ENCODE measurements at regions of chr12 and their contacts with region 1.

Region 1: DNA sequence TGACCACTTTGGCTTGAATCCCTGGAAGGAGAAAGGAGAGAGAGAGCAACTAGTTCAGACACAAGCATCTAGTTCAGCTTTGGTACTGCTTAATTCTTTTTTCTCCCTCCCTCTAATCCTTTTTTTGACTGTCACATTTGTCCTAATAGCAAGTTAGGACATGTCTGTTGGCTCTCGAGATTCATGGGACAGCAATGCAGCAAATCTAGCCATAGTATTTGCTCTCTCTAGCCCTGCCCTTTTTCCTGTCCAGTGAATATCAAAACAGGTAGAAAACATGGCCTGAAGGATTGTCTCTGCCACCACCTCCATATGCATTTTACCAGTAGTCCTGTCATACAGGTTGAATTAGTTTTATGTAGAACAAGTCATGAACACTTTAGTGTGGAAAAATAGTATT is 116.4 kb downstream of the PTPRB start:
- DNase-seq: no peak
- ATAC-seq: no peak
- H3K4me3 ChIP-seq: no peak overlapping the region
- H3K4me3 Mint-ChIP-seq: no peak overlapping the region
- H3K27ac ChIP-seq: no peak overlapping the region
- H3K27ac Mint-ChIP-seq: no peak overlapping the region
- H3K4me1 ChIP-seq: no peaks in the 10 kb centered on the region
- H3K4me1 Mint-ChIP-seq: no peaks in the 10 kb centered on the region
- H3K27me3 ChIP-seq: no peaks in the 10 kb centered on the region
- H3K27me3 Mint-ChIP-seq: peaks cover 7% of the 10 kb centered on the region
- CTCF ChIP-seq: no peak

Region 2: GRCh38 chr12:70059373-70059772 is 461.5 kb before region 1 on chr12:
- CTCF ChIA-PET with region 1: no interaction called
- POLR2A ChIA-PET with region 1: no interaction called
- intact Hi-C with region 1: no loop called
- DNase-seq: no peak
- ATAC-seq: no peak
- H3K4me3 ChIP-seq: no peak overlapping the region
- H3K4me3 Mint-ChIP-seq: no peak overlapping the region
- H3K27ac ChIP-seq: no peak overlapping the region
- H3K27ac Mint-ChIP-seq: no peak overlapping the region
- H3K4me1 ChIP-seq: no peaks in the 10 kb centered on the region
- H3K4me1 Mint-ChIP-seq: no peaks in the 10 kb centered on the region
- H3K27me3 ChIP-seq: no peaks in the 10 kb centered on the region
- H3K27me3 Mint-ChIP-seq: peaks cover 5% of the 10 kb centered on the region
- CTCF ChIP-seq: no peak

Region 3: GRCh38 chr12:70487440-70487839 is 33.4 kb before region 1 on chr12:
- CTCF ChIA-PET with region 1: no interaction called
- POLR2A ChIA-PET with region 1: no interaction called
- intact Hi-C with region 1: loop called in 1 of 2 experiments (anchors 1 kb)
- DNase-seq: no peak
- ATAC-seq: no peak
- H3K4me3 ChIP-seq: no peak overlapping the region
- H3K4me3 Mint-ChIP-seq: no peak overlapping the region
- H3K27ac ChIP-seq: no peak overlapping the region
- H3K27ac Mint-ChIP-seq: no peak overlapping the region
- H3K4me1 ChIP-seq: no peaks in the 10 kb centered on the region
- H3K4me1 Mint-ChIP-seq: no peaks in the 10 kb centered on the region
- H3K27me3 ChIP-seq: no peaks in the 10 kb centered on the region
- H3K27me3 Mint-ChIP-seq: peaks cover 23% of the 10 kb centered on the region
- CTCF ChIP-seq: no peak

Region 4: DNA sequence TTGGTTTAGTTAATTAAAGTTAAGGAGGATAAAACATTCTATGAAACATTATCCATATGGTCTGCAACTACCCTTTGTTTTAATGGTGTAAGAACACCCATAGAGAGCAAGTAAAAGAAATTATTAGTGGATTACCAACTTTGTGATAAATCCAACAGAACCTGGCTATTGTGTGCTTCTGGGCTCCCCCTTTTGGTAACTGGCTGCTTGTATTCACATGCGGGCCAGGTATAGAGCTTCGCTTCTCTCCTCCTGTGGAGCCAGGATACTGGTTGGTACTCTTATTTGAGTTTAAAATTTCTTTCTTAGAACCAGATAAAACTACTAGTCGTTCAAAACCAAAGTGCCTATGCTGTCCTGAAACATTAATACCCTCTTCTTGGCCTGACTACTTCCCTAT is 318.7 kb after region 1 on chr12:
- CTCF ChIA-PET with region 1: no interaction called
- POLR2A ChIA-PET with region 1: no interaction called
- intact Hi-C with region 1: no loop called
- DNase-seq: no peak
- ATAC-seq: no peak
- H3K4me3 ChIP-seq: no peak overlapping the region
- H3K4me3 Mint-ChIP-seq: no peak overlapping the region
- H3K27ac ChIP-seq: no peak overlapping the region
- H3K27ac Mint-ChIP-seq: no peak overlapping the region
- H3K4me1 ChIP-seq: no peaks in the 10 kb centered on the region
- H3K4me1 Mint-ChIP-seq: no peaks in the 10 kb centered on the region
- H3K27me3 ChIP-seq: no peaks in the 10 kb centered on the region
- H3K27me3 Mint-ChIP-seq: no peaks in the 10 kb centered on the region
- CTCF ChIP-seq: no peak